ENCODE measurements at regions of chr2 and their contacts with region 1.

Region 1: DNA sequence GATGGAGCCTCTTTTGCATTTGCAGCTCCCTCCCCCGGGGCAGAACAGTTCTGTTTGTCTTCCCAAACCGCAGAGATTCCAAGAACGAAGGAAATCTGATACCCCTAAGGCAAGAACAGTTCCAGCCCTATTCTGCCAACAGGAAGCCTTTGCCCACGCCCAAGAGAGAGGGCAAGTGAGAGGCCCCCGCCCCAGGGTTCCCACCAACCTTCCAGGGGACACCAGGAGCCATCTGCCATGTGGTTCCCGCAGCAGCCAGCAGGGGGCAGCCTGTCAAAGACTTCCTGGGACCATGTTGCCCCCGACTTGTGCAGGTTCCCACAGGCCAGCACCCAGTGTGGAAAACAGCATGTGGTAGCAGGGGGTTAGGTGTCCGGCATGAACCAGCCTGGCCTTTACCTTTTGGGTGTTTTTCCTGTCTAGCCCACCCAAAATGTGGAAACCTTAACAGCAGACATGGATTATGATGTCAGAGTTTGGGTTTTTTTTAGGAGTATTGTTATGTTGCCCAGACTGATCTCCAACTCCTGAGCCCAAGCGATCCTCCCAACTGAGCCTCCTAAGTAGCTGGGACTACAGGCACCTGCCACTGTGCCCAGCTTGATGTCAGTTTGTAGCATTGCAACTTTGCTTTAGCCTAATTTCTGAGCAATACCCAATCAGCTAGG is 21.7 kb upstream of the EFHD1 start:
- DNase-seq: peak; percentile 75
- H3K4me3 ChIP-seq: no peak overlapping the region
- H3K27ac ChIP-seq: no peak overlapping the region
- H3K4me1 ChIP-seq: no peaks in the 10 kb centered on the region
- H3K27me3 ChIP-seq: no peaks in the 10 kb centered on the region
- CTCF ChIP-seq: peak; percentile 49 to 86 (median 67)
- POLR2A ChIP-seq: no peak

Region 2: GRCh38 chr2:232668805-232669444 is 57.2 kb after region 1 on chr2:
- intact Hi-C with region 1: loop called (anchors 10 kb)
- DNase-seq: peak; percentile 59
- H3K4me3 ChIP-seq: no peak overlapping the region
- H3K27ac ChIP-seq: no peak overlapping the region
- H3K4me1 ChIP-seq: no peaks in the 10 kb centered on the region
- H3K27me3 ChIP-seq: no peaks in the 10 kb centered on the region
- CTCF ChIP-seq: peak in 2 of 3 experiments; percentile 28 to 45
- POLR2A ChIP-seq: no peak

Measured in testis (tissue), 5 donors.